GM10248 (cell line): ENCODE measurements at regions of chr10 and their contacts with region 1.

Region 1: DNA sequence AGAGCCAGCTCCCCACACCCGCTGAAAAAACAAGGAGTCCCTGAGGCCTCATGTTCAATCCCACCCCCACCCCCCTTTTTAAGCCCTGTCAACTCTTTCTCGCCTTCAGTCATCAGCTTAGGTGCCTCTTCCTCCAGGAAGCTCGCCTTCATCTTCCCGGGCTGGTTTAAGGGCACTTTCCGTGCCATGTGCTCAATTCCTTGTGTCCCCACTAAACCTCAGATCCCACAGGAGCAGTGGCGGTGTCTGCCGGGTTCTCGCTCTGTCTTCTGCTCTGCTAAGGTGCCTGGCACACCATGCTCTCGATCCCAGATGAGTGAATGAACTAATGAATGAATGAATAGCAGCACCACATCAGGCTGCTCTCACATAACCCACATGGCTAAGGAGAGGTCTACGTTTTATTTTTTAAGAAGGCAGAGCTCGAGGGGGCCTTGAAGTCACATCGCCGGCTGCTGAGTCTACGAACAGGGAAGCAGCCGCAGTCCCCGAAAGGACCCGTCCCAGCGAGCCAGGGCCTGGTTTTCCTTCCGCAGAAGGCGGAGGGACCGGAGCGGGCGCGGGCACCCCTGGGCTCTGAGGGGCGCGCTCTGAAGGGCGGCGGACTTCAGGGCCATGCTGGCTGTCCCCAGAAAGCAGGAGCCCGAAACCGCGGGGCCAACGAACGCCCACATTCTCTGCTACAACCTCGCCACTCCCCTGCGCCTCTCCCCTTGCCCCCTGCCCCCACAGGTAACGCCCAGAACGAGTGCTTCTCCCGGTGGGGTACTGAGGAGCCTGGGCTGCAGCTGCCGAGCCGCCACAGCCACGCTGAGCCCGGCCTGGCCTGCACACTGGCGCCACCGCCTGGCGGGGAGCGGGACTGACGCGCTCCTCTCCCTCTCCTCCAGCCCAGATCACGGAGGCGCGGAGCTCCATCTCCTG is 73.4 kb upstream of the KCNMA1 start:
- DNase-seq: peak; percentile 87
- CTCF ChIP-seq: peak; percentile 99

Region 2: GRCh38 chr10:77156406-77156879 is 554.6 kb before region 1 on chr10:
- CTCF ChIA-PET with region 1: interaction called, 115 read pairs
- POLR2A ChIA-PET with region 1: no interaction called
- DNase-seq: no peak
- CTCF ChIP-seq: no peak

Region 3: GRCh38 chr10:77173615-77174461 is 537.2 kb before region 1 on chr10:
- CTCF ChIA-PET with region 1: interaction called, 115 read pairs
- POLR2A ChIA-PET with region 1: no interaction called
- DNase-seq: peak; percentile 53
- CTCF ChIP-seq: peak; percentile 92

Region 4: GRCh38 chr10:77641788-77642397 is 69.1 kb before region 1 on chr10:
- CTCF ChIA-PET with region 1: interaction called, 18 read pairs
- POLR2A ChIA-PET with region 1: no interaction called
- DNase-seq: peak; percentile 62
- CTCF ChIP-seq: peak; percentile 66

Region 5: DNA sequence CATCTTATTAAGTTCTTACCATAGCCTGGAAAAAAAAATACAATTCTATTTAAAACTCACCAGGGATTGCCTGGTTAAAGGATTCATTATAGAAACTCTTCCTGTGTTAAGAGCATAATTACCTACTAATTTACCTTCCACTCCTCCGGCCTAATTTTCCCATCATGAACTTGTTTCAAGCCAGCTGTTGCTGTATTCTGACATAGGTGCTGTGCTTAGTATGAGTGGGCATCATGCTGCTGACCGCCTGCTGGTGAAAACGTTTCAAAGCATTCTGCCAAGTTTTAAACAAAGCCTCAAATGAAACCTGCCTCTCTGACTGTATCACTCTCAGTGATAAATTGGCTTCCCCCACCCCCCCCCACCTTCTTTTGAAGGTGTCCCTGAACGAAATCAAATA is 25.6 kb before region 1 on chr10:
- CTCF ChIA-PET with region 1: interaction called, 84 read pairs
- POLR2A ChIA-PET with region 1: no interaction called
- DNase-seq: no peak
- CTCF ChIP-seq: no peak

Region 6: DNA sequence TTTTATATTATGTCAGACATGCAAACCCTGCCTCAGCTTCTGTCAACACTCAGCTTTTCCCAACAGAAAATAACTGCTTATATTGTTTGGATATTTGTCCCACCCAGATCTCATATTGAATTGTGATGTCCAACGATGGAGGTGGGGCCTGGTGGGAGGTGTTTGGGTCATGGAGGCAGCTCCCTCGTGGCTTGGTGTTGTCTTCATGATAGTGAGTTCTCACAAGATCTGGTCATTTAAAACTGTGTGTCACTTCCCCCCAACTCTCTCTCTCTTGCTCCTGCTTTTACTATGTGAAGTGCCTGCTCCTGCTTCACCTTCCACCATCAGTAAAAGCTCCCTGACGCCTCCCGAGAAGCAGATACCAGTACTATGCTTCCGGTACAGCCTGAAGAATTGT is 12.4 kb after region 1 on chr10:
- CTCF ChIA-PET with region 1: interaction called, 33 read pairs
- POLR2A ChIA-PET with region 1: no interaction called
- DNase-seq: no peak
- CTCF ChIP-seq: no peak

Region 7: GRCh38 chr10:77873536-77874380 is 162.7 kb after region 1 on chr10:
- CTCF ChIA-PET with region 1: no interaction called
- POLR2A ChIA-PET with region 1: no interaction called
- DNase-seq: peak; percentile 77
- CTCF ChIP-seq: no peak

Region 8: GRCh38 chr10:77949167-77949566 is 238.1 kb after region 1 on chr10:
- CTCF ChIA-PET with region 1: no interaction called
- POLR2A ChIA-PET with region 1: no interaction called
- DNase-seq: no peak
- CTCF ChIP-seq: no peak